ENCODE measurements at regions of chr6 and their contacts with region 1.

Region 1: DNA sequence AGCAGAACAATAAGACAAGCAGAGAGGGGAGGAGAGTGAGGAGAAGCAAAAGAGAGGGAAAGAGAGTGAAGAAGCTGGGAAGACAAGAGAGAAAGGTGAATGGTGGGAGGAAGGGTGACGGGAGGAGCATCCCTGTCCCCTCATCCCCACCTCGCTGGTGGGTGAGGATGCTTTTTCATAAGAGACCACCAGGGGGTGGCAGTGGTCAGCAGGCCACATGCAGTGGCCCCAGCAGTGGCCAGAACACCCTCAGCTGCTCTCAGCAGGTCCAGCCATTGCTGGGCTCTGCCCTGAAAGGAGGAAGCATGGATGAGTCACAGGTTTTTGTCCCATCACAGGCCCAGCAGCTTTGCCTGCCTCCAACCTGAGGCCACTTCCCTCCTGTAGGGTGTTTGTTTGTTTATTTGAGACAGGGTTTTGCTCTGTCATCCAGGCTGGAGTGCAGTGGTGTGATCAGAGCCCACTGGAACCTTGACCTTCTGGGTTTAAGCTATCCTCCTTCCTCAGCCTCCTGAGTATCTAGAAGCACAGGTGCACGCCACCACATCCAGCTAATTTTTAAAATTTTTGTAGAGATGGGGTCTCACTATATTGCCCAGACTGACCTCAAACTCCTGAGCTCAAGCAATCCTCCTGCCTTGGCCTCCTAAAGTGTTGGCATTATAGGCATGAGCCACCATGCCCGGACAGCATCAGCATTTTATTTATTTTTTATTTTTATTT is 24.0 kb downstream of the FGD2 start:
- DNase-seq: no peak
- H3K4me3 Mint-ChIP-seq: no peak overlapping the region
- H3K27ac Mint-ChIP-seq: peak overlapping the region; percentile 79
- H3K4me1 Mint-ChIP-seq: peaks cover 63% of the 10 kb centered on the region
- H3K27me3 Mint-ChIP-seq: no peaks in the 10 kb centered on the region

Region 2: DNA sequence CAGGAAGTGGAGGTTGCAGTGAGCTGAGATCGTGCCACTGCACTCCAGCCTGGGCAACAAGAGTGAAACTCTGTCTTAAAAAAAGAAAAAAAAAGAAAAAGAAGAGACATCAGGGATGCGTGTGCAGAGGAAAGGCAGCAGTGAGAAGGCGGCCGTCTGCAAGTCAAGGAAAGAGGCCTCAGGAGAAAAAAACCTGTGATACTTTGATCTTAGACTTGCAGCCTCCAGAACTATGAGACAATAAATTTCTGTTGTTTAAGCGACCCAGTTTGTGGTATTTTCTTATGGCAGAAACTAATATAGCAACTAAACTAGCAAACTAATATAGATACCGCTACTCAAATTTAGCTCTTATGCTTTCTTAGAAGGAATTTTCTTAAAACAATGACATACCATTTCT is 12.1 kb after region 1 on chr6:
- intact Hi-C with region 1: loop called (anchors 1 kb)
- DNase-seq: no peak
- H3K4me3 Mint-ChIP-seq: peak overlapping the region; percentile 22
- H3K27ac Mint-ChIP-seq: peak overlapping the region; percentile 18
- H3K4me1 Mint-ChIP-seq: peaks cover 57% of the 10 kb centered on the region
- H3K27me3 Mint-ChIP-seq: no peaks in the 10 kb centered on the region

Region 3: GRCh38 chr6:37102279-37103168 is 73.1 kb after region 1 on chr6:
- intact Hi-C with region 1: loop called (anchors 5 kb)
- DNase-seq: peak; percentile 70
- H3K4me3 Mint-ChIP-seq: peak overlapping the region; percentile 56
- H3K27ac Mint-ChIP-seq: peak overlapping the region; percentile 85
- H3K4me1 Mint-ChIP-seq: peaks cover 58% of the 10 kb centered on the region
- H3K27me3 Mint-ChIP-seq: no peaks in the 10 kb centered on the region

Region 4: DNA sequence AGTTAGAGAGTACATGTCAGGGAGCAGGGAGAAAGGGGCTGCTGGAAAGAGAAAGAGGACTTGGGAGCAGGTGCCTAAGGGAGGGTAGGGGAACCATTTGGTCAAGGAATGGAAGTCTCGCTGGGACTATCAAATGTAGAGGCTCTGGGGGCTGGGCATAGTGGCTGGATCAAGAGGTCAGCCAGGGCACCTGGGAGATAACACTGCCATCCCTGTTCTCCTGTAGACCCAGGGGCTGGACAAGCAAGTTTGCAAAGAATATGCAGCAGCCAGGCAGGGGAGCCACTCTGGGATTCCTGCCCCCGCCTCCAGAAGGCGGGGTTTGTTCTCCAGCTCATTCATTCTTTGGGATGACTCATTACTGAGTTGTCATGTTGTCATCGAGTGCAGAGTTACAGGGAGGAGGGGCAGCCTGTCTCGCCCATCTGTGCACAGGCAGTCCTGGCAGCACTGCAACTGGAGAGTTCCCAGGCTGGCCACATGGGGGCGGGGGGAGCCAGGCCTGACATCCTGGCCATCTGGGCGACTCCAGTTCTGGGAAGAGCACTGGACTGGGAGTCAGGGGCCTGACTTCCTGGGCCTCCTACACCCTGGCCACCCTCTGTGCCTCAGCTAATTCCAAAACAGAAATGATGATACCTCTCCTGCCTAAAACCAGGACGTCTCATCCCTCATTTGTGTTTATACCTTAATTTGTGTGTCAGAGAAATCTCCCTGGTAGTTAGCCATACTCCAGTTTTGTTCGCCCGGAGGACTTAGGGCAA is 761.9 kb after region 1 on chr6:
- intact Hi-C with region 1: no loop called
- DNase-seq: peak; percentile 66
- H3K4me3 Mint-ChIP-seq: no peak overlapping the region
- H3K27ac Mint-ChIP-seq: no peak overlapping the region
- H3K4me1 Mint-ChIP-seq: peaks cover 12% of the 10 kb centered on the region
- H3K27me3 Mint-ChIP-seq: peaks cover 1% of the 10 kb centered on the region